Naive thymus-derived CD4-positive, alpha-beta T cell (primary cell): ENCODE measurements at regions of chr16 and their contacts with region 1.

Region 1: DNA sequence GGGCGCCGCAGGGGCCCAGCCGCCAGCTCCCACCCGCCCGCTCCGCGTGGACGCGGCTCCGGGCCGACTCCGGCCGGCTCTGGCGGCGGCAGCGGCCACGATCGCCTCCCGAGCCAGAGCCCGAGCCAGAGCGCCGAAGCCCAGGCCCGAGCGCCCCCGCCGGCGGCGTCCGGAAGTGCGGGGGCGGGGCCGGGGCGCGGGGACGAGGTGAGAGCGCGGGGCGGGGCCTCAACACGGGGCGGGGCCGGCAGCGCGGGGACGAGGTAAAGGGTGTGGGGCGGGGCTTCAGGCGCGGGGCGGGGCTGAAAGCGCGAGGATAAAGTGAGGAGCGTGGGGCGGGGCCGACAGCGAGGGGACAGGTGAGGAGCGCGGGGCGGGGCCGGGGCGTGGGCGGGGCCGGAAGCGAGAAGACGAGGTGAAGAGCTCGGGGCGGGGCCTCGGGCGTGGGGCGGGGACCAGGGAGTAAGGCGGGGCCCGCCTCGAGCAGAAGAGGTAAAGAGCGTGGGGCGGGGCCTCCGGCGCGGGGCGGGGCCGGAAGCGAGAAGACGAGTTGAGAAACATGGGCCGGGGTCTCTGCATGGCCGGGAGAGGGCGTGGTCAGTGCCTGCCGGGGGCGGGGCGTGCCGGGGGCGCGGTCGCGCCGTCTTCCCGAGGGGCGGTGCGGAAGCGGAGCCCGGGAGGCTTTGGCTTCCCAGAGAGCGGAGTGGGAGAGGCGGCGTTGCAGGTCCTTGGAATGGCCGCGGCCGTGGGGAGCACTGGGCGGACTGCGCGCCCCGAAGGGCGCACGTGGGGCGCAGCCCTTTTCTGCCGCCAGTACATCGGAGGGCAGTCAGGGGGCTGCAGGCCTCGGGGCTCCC is at the start of gene AXIN1:
- DNase-seq: peak; percentile 98 to 100 (median 99)
- ATAC-seq: peak; percentile 94
- H3K4me3 ChIP-seq: peak within 1 kb of the TSS; percentile 57
- H3K4me3 Mint-ChIP-seq: peak within 1 kb of the TSS; percentile 80 to 97 (median 93)
- H3K27ac ChIP-seq: peak within 1 kb of the TSS; percentile 75
- H3K27ac Mint-ChIP-seq: peak within 1 kb of the TSS; percentile 68 to 97 (median 94)
- H3K4me1 ChIP-seq: peaks cover 43 to 59% of the 10 kb centered on the region in 2 donors
- H3K4me1 Mint-ChIP-seq: peaks cover 25 to 61% (median 44%) of the 10 kb centered on the region in 7 donors
- H3K27me3 ChIP-seq: no peaks in the 10 kb centered on the region
- H3K27me3 Mint-ChIP-seq: no peaks in the 10 kb centered on the region
- total RNA-seq, gene AXIN1: 25.6 to 45.9 (median 37.5) TPM

Region 2: GRCh38 chr16:138049-138417 is 214.7 kb before region 1 on chr16:
- CTCF ChIA-PET with region 1: no interaction called
- POLR2A ChIA-PET with region 1: interaction called, 3 read pairs
- intact Hi-C with region 1: loop called in 1 of 2 experiments (anchors 1 kb)
- DNase-seq: peak in 7 of 9 donors; percentile 10 to 55 (median 23)
- ATAC-seq: peak; percentile 24
- H3K4me3 ChIP-seq: peak overlapping the region; percentile 58
- H3K4me3 Mint-ChIP-seq: peak overlapping the region; percentile 74 to 90 (median 84)
- H3K27ac ChIP-seq: peak overlapping the region; percentile 68
- H3K27ac Mint-ChIP-seq: peak overlapping the region in 7 of 9 donors; percentile 11 to 94 (median 75)
- H3K4me1 ChIP-seq: peaks cover 6% of the 10 kb centered on the region in 2 donors
- H3K4me1 Mint-ChIP-seq: peaks cover 9 to 47% (median 26%) of the 10 kb centered on the region in 7 donors
- H3K27me3 ChIP-seq: no peaks in the 10 kb centered on the region
- H3K27me3 Mint-ChIP-seq: peaks cover 0 to 6% (median 0%) of the 10 kb centered on the region in 5 donors

Region 3: GRCh38 chr16:228818-229730 is 123.7 kb before region 1 on chr16 and contains the start of gene LUC7L:
- CTCF ChIA-PET with region 1: interaction called, 3 read pairs
- POLR2A ChIA-PET with region 1: interaction called, 13 read pairs
- intact Hi-C with region 1: loop called (anchors 1 kb)
- DNase-seq: peak; percentile 78 to 90 (median 85)
- ATAC-seq: peak; percentile 95
- H3K4me3 ChIP-seq: peak within 1 kb of the TSS; percentile 69
- H3K4me3 Mint-ChIP-seq: peak within 1 kb of the TSS; percentile 87 to 96 (median 90)
- H3K27ac ChIP-seq: peak within 1 kb of the TSS; percentile 98
- H3K27ac Mint-ChIP-seq: peak within 1 kb of the TSS; percentile 82 to 94 (median 92)
- H3K4me1 ChIP-seq: peaks cover 14 to 18% of the 10 kb centered on the region in 2 donors
- H3K4me1 Mint-ChIP-seq: peaks cover 13 to 40% (median 33%) of the 10 kb centered on the region in 7 donors
- H3K27me3 ChIP-seq: no peaks in the 10 kb centered on the region
- H3K27me3 Mint-ChIP-seq: no peaks in the 10 kb centered on the region
- total RNA-seq, gene LUC7L: 64.7 to 177 (median 154) TPM

Region 4: DNA sequence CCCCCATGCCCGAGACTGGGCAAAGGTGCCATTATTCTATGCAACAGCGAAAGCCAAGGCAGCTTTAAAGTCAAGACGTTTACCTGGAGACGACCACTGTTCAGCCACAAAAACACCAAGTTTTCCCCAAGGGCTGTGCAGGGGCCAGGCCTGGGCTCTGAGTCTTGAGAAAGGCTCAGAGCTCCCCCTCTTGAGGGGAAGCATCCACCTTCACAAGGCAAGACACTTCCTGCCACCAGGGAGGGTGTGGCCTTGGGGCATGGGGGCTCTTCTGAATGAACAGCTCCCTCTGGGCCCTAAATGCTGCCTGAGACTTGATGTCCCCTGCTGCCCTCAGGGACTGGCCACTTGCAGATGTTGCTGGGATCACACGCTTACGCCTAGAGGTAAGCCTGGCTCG is 43.3 kb before region 1 on chr16:
- CTCF ChIA-PET with region 1: interaction called, 4 read pairs
- POLR2A ChIA-PET with region 1: interaction called, 3 read pairs
- intact Hi-C with region 1: loop called in 1 of 2 experiments (anchors 5 kb)
- DNase-seq: peak in 5 of 9 donors; percentile 33 to 52 (median 40)
- ATAC-seq: peak; percentile 60
- H3K4me3 ChIP-seq: no peak overlapping the region
- H3K4me3 Mint-ChIP-seq: peak overlapping the region in 3 of 10 donors; percentile 28 to 57 (median 39)
- H3K27ac ChIP-seq: no peak overlapping the region
- H3K27ac Mint-ChIP-seq: peak overlapping the region in 7 of 9 donors; percentile 25 to 82 (median 69)
- H3K4me1 ChIP-seq: peaks cover 0 to 4% of the 10 kb centered on the region in 2 donors
- H3K4me1 Mint-ChIP-seq: peaks cover 10 to 37% (median 20%) of the 10 kb centered on the region in 7 donors
- H3K27me3 ChIP-seq: no peaks in the 10 kb centered on the region
- H3K27me3 Mint-ChIP-seq: no peaks in the 10 kb centered on the region

Region 5: GRCh38 chr16:370443-370842 is 17.7 kb after region 1 on chr16 and contains the start of gene MRPL28:
- CTCF ChIA-PET with region 1: interaction called, 6 read pairs
- POLR2A ChIA-PET with region 1: interaction called, 7 read pairs
- intact Hi-C with region 1: loop called (anchors 1 kb)
- DNase-seq: peak; percentile 75 to 93 (median 92)
- ATAC-seq: peak; percentile 99
- H3K4me3 ChIP-seq: peak within 1 kb of the TSS; percentile 30
- H3K4me3 Mint-ChIP-seq: peak within 1 kb of the TSS; percentile 81 to 97 (median 90)
- H3K27ac ChIP-seq: peak within 1 kb of the TSS; percentile 67
- H3K27ac Mint-ChIP-seq: peak within 1 kb of the TSS; percentile 80 to 96 (median 89)
- H3K4me1 ChIP-seq: peaks cover 10 to 14% of the 10 kb centered on the region in 2 donors
- H3K4me1 Mint-ChIP-seq: peaks cover 4 to 26% (median 13%) of the 10 kb centered on the region in 7 donors
- H3K27me3 ChIP-seq: no peaks in the 10 kb centered on the region
- H3K27me3 Mint-ChIP-seq: no peaks in the 10 kb centered on the region
- total RNA-seq, gene MRPL28: 21.9 to 86.2 (median 26.5) TPM

Region 6: GRCh38 chr16:401468-402348 is 48.9 kb after region 1 on chr16 and contains the start of gene DECR2:
- CTCF ChIA-PET with region 1: no interaction called
- POLR2A ChIA-PET with region 1: interaction called, 3 read pairs
- intact Hi-C with region 1: loop called (anchors 1 to 10 kb)
- DNase-seq: peak; percentile 89 to 98 (median 95)
- ATAC-seq: peak; percentile 94
- H3K4me3 ChIP-seq: peak within 1 kb of the TSS; percentile 86
- H3K4me3 Mint-ChIP-seq: peak within 1 kb of the TSS; percentile 84 to 92 (median 89)
- H3K27ac ChIP-seq: peak within 1 kb of the TSS; percentile 82
- H3K27ac Mint-ChIP-seq: peak within 1 kb of the TSS; percentile 81 to 97 (median 94)
- H3K4me1 ChIP-seq: peaks cover 0 to 5% of the 10 kb centered on the region in 2 donors
- H3K4me1 Mint-ChIP-seq: peaks cover 10 to 21% (median 11%) of the 10 kb centered on the region in 7 donors
- H3K27me3 ChIP-seq: no peaks in the 10 kb centered on the region
- H3K27me3 Mint-ChIP-seq: peaks cover 0 to 1% (median 0%) of the 10 kb centered on the region in 5 donors
- total RNA-seq, gene DECR2: 7.9 to 13.8 (median 11.6) TPM